BJ (cell line): ENCODE measurements at regions of chr15 and their contacts with region 1.

Region 1: GRCh38 chr15:77909182-77909940 is 168.2 kb downstream of the TBC1D2B start:
- DNase-seq: no peak
- H3K4me3 ChIP-seq: no peak overlapping the region
- H3K27me3 ChIP-seq: no peaks in the 10 kb centered on the region; the same call in 1 of the 2 replicates
- CTCF ChIP-seq: no peak

Region 2: GRCh38 chr15:77959432-77959879 is 50.1 kb after region 1 on chr15:
- CTCF ChIA-PET with region 1: interaction called, 10 read pairs
- POLR2A ChIA-PET with region 1: no interaction called
- DNase-seq: no peak
- H3K4me3 ChIP-seq: 0 out of 2 replicates have a peak overlapping the region, but pooled peaks have one; percentile 2
- H3K27me3 ChIP-seq: peaks cover 7% of the 10 kb centered on the region
- CTCF ChIP-seq: peak; percentile 94

Region 3: DNA sequence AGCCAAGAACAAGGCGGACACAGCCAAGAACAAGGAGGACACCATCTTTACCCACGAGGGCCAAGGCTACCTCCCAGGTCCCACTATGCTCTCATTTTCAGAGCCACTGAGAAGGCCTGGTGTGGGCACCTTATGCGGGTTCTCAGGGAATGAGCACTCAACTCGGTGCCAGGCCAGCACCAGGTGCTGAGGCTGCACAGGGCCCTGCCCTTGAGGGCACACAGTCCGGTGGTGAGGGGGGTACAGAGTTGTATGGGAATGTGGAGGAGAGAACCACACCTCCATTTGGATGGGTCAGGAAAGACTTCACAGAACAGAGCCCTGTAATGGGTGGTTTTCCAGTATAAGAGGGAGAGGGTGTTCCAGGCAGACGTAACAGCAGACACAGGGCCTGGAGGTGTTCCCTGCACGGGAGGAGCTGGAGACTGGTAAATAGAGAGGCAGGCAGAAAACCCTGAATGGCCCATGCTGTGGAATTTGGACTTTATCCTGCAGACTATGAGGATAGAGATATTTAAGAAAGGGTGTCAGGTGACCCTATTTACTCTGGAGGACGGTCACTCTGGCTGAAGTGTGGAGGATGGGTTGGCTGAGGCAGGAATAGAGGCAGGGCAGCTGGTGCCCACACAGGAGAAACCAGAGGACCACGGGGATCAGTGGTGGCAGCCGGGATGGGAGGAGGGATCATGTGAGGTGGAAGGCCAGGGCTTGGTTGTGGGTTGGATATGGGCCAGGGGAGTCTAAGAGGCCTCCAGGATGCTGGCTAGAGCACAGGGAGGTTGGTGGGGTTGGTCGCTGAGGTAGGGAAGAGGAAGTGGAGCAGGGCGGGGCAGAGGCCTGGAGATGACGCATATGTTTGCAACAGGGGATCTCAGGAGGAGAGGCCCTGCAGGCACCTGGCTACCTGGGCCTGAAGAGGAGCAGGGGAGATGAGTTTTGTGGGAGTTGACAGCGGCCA is 465.4 kb after region 1 on chr15:
- CTCF ChIA-PET with region 1: no interaction called
- POLR2A ChIA-PET with region 1: no interaction called
- DNase-seq: no peak
- H3K4me3 ChIP-seq: no peak overlapping the region
- H3K27me3 ChIP-seq: 0 out of 2 replicates have a peak, but pooled peaks cover 2% of the 10 kb centered on the region
- CTCF ChIP-seq: no peak